ENCODE measurements at regions of chr11 and their contacts with region 1.

Region 1: GRCh38 chr11:128172046-128172878 is 415.1 kb downstream of the ETS1 start:
- DNase-seq: peak; percentile 73
- H3K4me3 ChIP-seq: no peak overlapping the region
- H3K27ac ChIP-seq: no peak overlapping the region
- H3K4me1 ChIP-seq: no peaks in the 10 kb centered on the region
- H3K27me3 ChIP-seq: no peaks in the 10 kb centered on the region
- CTCF ChIP-seq: peak in 3 of 4 experiments; percentile 61 to 72 (median 70)
- POLR2A ChIP-seq: no peak

Region 2: DNA sequence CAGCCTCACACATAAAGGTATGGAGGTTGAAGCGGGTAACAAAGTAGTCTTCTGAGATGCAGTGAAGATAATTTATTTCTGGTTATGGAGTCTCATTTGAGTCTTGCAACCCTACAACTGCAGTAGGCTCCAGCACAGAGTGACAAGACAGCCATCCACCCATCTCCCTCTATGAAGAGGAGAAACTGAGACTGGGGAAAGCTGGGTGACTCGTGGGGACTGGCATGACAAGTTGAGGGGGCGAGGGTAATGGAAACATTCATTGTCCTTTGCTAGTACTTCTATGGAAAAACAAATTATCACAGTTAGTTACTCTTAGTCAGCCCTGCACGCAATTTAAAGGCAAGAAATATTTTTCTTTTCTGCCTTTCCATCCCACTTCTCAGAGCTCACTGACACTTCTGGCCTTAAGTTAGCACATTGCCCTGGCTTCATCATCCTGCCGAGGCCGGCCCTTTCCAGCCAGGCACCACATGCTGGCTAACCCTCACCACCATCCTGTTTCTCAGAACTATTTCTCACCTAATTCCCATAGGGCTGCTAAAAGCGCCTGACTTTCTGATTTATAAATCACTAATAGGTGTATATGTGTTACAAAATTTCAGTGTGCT is 53.9 kb after region 1 on chr11:
- intact Hi-C with region 1: no loop called
- DNase-seq: no peak
- H3K4me3 ChIP-seq: no peak overlapping the region
- H3K27ac ChIP-seq: no peak overlapping the region
- H3K4me1 ChIP-seq: no peaks in the 10 kb centered on the region
- H3K27me3 ChIP-seq: no peaks in the 10 kb centered on the region
- CTCF ChIP-seq: no peak
- POLR2A ChIP-seq: no peak

Region 3: GRCh38 chr11:128630367-128631230 is 458.3 kb after region 1 on chr11:
- intact Hi-C with region 1: loop called (anchors 5 kb)
- DNase-seq: peak; percentile 69
- H3K4me3 ChIP-seq: no peak overlapping the region
- H3K27ac ChIP-seq: no peak overlapping the region
- H3K4me1 ChIP-seq: no peaks in the 10 kb centered on the region
- H3K27me3 ChIP-seq: no peaks in the 10 kb centered on the region
- CTCF ChIP-seq: peak; percentile 80 to 93 (median 89)
- POLR2A ChIP-seq: no peak

Measured in prostate gland (tissue), 2 donors.